Heart left ventricle (tissue), 16 donors: ENCODE measurements at regions of chr6 and their contacts with region 1.

Region 1: DNA sequence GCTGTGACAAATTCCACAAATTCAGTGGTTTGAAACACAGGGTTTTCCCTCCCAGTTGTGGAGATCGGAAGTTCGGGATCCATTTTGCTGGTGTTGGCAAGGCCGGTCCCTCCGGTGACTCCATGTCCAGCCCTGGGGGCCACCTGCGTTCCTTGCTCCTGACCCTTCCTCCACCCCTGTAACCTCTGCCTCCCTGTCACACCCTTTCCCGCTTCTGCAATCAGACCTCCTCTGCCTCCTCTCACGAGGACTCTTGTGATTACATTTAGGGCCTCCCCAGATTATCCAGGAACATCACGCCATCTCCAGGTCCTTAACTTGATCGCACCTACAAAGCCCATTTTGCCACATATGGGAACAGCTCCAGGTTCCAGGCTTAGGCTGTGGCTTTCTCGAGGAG is 12.5 kb downstream of the RPS6KA2 start:
- DNase-seq: no peak
- ATAC-seq: peak; percentile 7 to 28 (median 16)
- H3K4me3 ChIP-seq: no peak overlapping the region
- H3K27ac ChIP-seq: peak overlapping the region; percentile 19 to 82 (median 66)
- H3K4me1 ChIP-seq: peaks cover 14 to 61% (median 36%) of the 10 kb centered on the region in 12 donors
- H3K27me3 ChIP-seq: no peaks in the 10 kb centered on the region
- CTCF ChIP-seq: no peak
- POLR2A ChIP-seq: no peak

Region 2: DNA sequence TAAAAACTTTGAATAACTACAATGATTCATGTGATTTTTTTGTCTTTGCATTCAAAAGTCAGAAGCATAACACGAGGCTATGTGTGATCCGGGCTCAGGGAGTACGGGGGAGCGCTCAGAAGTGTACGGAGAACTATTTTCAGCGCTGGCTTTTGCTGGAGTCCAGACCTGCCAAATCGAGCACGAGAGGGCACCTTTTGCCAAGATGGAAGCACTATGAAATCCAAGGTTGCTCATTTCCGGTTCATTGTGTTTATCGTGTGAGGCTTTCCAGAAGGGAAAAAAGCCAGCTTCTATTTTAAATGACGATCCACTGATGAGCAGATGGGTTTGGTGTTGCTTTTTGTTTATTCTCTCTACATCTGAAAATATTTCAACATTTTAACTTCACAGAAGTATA is 39.4 kb before region 1 on chr6:
- intact Hi-C with region 1: loop called in 1 of 10 experiments (anchors 5 kb)
- DNase-seq: peak in 4 of 5 donors; percentile 62 to 74 (median 68)
- ATAC-seq: peak; percentile 87 to 95 (median 94)
- H3K4me3 ChIP-seq: no peak overlapping the region
- H3K27ac ChIP-seq: peak overlapping the region; percentile 6 to 73 (median 46)
- H3K4me1 ChIP-seq: peaks cover 0 to 30% (median 17%) of the 10 kb centered on the region in 12 donors
- H3K27me3 ChIP-seq: no peaks in the 10 kb centered on the region
- CTCF ChIP-seq: peak in 1 of 12 donors; percentile 26
- POLR2A ChIP-seq: no peak